Calu3 (cell line): ENCODE measurements at regions of chr18 and their contacts with region 1.

Region 1: DNA sequence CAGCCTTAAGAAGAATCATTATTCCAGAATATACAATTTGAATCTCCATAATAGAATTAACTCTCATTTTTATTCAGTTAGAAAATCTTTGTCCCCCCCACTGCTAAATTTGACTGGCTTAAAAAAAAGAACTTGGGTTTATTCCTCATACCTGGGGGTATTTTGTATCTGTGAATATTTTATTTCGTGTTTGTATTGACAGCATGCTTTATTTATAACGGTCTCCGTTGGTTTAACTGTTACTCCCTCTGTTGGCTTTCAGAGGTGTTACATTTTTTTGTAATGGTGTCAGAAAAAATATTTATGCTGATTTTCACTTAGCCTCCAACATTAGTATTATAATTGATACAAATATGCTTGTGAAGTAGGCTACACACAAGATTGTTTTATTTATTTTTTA is 109.1 kb downstream of the HAUS1 start:
- DNase-seq: no peak
- H3K4me3 Mint-ChIP-seq: no peak overlapping the region
- H3K27ac Mint-ChIP-seq: no peak overlapping the region
- H3K4me1 Mint-ChIP-seq: peaks cover 17% of the 10 kb centered on the region
- H3K27me3 Mint-ChIP-seq: no peaks in the 10 kb centered on the region
- CTCF ChIP-seq: peak; percentile 52

Region 2: DNA sequence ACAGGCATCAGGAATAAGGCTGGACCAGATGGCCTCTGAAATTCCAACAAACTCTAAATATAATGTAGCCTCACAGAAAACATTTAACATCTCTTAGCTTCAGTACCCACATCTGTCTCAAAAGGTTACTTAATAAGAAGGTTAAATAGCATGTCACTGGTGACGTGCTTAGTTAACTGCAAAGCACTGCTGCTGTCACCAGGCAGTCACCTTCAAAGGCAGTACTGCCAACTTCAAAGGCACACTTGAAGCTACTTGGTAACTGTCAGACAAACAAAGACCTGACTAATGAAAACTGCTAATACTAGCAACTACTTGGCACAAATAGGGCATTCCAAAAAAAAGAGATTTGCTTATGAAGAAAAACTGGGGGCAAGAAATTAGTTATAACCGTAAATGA is 282.3 kb before region 1 on chr18:
- CTCF ChIA-PET with region 1: no interaction called
- intact Hi-C with region 1: no loop called
- DNase-seq: no peak
- H3K4me3 Mint-ChIP-seq: no peak overlapping the region
- H3K27ac Mint-ChIP-seq: no peak overlapping the region
- H3K4me1 Mint-ChIP-seq: peaks cover 6% of the 10 kb centered on the region
- H3K27me3 Mint-ChIP-seq: no peaks in the 10 kb centered on the region
- CTCF ChIP-seq: no peak

Region 3: GRCh38 chr18:46173393-46174341 is 39.6 kb before region 1 on chr18:
- CTCF ChIA-PET with region 1: interaction called, 12 read pairs
- intact Hi-C with region 1: loop called (anchors 5 kb)
- DNase-seq: peak; percentile 97
- H3K4me3 Mint-ChIP-seq: peak overlapping the region; percentile 97
- H3K27ac Mint-ChIP-seq: peak overlapping the region; percentile 97
- H3K4me1 Mint-ChIP-seq: peaks cover 9% of the 10 kb centered on the region
- H3K27me3 Mint-ChIP-seq: no peaks in the 10 kb centered on the region
- CTCF ChIP-seq: peak; percentile 93

Region 4: DNA sequence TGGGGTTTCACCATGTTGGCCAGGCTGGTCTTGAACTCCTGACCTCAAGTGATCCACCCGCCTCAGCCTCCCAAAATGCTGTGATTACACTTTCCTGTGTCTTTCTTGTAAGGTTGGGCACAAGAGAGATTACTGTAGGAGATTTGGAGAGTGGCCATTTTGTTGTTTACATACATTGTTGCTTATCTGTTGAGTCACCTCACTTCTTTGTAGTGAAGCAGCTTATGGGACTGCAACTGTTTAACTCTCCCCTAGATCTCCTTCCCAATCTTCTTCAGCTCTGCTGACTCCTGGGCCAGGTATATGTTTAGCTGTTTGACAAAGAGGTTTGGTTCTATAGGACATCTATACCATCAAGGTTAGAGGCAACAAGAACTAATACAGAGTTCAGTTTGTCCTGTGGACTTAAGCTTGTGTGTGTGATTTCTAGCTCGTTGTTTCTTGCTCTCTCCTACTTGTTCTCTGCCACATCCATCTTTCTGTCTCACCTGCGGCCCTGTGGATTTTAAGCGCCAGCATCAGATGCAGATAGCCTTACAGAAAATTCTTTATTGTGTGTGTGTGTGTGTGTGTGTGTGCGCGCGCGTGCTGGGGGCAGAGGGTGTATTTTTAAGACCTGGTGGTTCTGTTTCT is 13.7 kb before region 1 on chr18:
- CTCF ChIA-PET with region 1: interaction called, 10 read pairs
- intact Hi-C with region 1: no loop called
- DNase-seq: no peak
- H3K4me3 Mint-ChIP-seq: no peak overlapping the region
- H3K27ac Mint-ChIP-seq: peak overlapping the region; percentile 22
- H3K4me1 Mint-ChIP-seq: peaks cover 20% of the 10 kb centered on the region
- H3K27me3 Mint-ChIP-seq: no peaks in the 10 kb centered on the region
- CTCF ChIP-seq: no peak